MCF 10A (cell line): ENCODE measurements at regions of chr1 and their contacts with region 1.

Region 1: GRCh38 chr1:163528710-163529348 is 207.1 kb downstream of the NUF2 start:
- DNase-seq: peak; percentile 62
- H3K4me3 Mint-ChIP-seq: no peak overlapping the region
- H3K27ac Mint-ChIP-seq: no peak overlapping the region
- H3K4me1 Mint-ChIP-seq: no peaks in the 10 kb centered on the region
- H3K27me3 Mint-ChIP-seq: no peaks in the 10 kb centered on the region
- CTCF ChIP-seq: peak; percentile 66

Region 2: GRCh38 chr1:163361123-163361934 is 167.5 kb before region 1 on chr1:
- CTCF ChIA-PET with region 1: interaction called, 7 read pairs
- POLR2A ChIA-PET with region 1: no interaction called
- intact Hi-C with region 1: loop called (anchors 2 kb)
- DNase-seq: peak; percentile 58
- H3K4me3 Mint-ChIP-seq: no peak overlapping the region
- H3K27ac Mint-ChIP-seq: no peak overlapping the region
- H3K4me1 Mint-ChIP-seq: no peaks in the 10 kb centered on the region
- H3K27me3 Mint-ChIP-seq: no peaks in the 10 kb centered on the region
- CTCF ChIP-seq: peak; percentile 65

Region 3: GRCh38 chr1:163410073-163410999 is 118.5 kb before region 1 on chr1:
- CTCF ChIA-PET with region 1: interaction called, 26 read pairs
- POLR2A ChIA-PET with region 1: no interaction called
- intact Hi-C with region 1: loop called (anchors 2 kb)
- DNase-seq: peak; percentile 75
- H3K4me3 Mint-ChIP-seq: peak overlapping the region; percentile 26
- H3K27ac Mint-ChIP-seq: no peak overlapping the region
- H3K4me1 Mint-ChIP-seq: peaks cover 8% of the 10 kb centered on the region
- H3K27me3 Mint-ChIP-seq: peaks cover 8% of the 10 kb centered on the region
- CTCF ChIP-seq: peak; percentile 91

Region 4: GRCh38 chr1:163561580-163562295 is 32.9 kb after region 1 on chr1:
- CTCF ChIA-PET with region 1: interaction called, 17 read pairs
- POLR2A ChIA-PET with region 1: no interaction called
- intact Hi-C with region 1: no loop called
- DNase-seq: peak; percentile 51
- H3K4me3 Mint-ChIP-seq: no peak overlapping the region
- H3K27ac Mint-ChIP-seq: no peak overlapping the region
- H3K4me1 Mint-ChIP-seq: no peaks in the 10 kb centered on the region
- H3K27me3 Mint-ChIP-seq: no peaks in the 10 kb centered on the region
- CTCF ChIP-seq: peak; percentile 42

Region 5: GRCh38 chr1:163701783-163702374 is 173.1 kb after region 1 on chr1:
- CTCF ChIA-PET with region 1: interaction called, 3 read pairs
- POLR2A ChIA-PET with region 1: no interaction called
- intact Hi-C with region 1: loop called (anchors 5 kb)
- DNase-seq: no peak
- H3K4me3 Mint-ChIP-seq: no peak overlapping the region
- H3K27ac Mint-ChIP-seq: no peak overlapping the region
- H3K4me1 Mint-ChIP-seq: no peaks in the 10 kb centered on the region
- H3K27me3 Mint-ChIP-seq: no peaks in the 10 kb centered on the region
- CTCF ChIP-seq: peak; percentile 11